Activated naive CD4-positive, alpha-beta T cell treated with anti-CD3 and anti-CD28 coated beads, Interleukin-2, amount 10 ng/mL, durations not matched to agents 7 days and 5 days (primary cell): ENCODE measurements at regions of chr9 and their contacts with region 1.

Region 1: GRCh38 chr9:17116400-17116837 is 18.4 kb upstream of the CNTLN start:
- DNase-seq: no peak
- H3K4me3 Mint-ChIP-seq: no peak overlapping the region
- H3K27ac Mint-ChIP-seq: no peak overlapping the region
- H3K4me1 Mint-ChIP-seq: no peaks in the 10 kb centered on the region
- H3K27me3 Mint-ChIP-seq: no peaks in the 10 kb centered on the region

Region 2: DNA sequence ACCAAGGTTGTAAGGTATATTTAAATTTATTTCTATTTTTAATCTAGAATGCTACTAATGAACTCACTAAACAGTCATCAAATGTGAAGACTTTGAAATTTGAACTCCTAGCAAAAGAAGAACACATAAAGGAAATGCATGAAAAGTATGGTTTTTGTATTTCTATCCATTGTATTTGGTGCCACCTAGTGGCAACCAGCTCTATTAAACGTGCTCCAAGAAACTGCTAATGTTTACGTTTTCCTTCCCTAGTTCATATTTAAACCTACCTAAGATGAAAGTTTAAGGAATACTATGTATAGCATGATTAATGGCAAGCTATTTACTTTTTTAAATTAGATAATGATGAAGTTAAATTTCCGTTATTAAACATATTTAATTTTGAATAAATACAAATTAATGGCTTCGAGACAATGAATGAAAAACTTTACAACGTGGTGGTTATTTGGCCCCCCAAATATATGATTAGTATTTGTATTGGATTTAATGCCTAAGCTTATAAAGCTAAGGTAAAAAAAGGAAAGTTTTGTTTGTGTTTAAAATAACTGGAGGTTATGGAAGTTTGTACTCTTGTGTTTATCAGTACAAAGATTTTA is 346.5 kb after region 1 on chr9:
- CTCF ChIA-PET with region 1: interaction called, 27 read pairs
- DNase-seq: peak; percentile 20
- H3K4me3 Mint-ChIP-seq: no peak overlapping the region
- H3K27ac Mint-ChIP-seq: no peak overlapping the region
- H3K4me1 Mint-ChIP-seq: no peaks in the 10 kb centered on the region
- H3K27me3 Mint-ChIP-seq: no peaks in the 10 kb centered on the region